Naive thymus-derived CD4-positive, alpha-beta T cell (primary cell): ENCODE measurements at regions of chr14 and their contacts with region 1.

Region 1: DNA sequence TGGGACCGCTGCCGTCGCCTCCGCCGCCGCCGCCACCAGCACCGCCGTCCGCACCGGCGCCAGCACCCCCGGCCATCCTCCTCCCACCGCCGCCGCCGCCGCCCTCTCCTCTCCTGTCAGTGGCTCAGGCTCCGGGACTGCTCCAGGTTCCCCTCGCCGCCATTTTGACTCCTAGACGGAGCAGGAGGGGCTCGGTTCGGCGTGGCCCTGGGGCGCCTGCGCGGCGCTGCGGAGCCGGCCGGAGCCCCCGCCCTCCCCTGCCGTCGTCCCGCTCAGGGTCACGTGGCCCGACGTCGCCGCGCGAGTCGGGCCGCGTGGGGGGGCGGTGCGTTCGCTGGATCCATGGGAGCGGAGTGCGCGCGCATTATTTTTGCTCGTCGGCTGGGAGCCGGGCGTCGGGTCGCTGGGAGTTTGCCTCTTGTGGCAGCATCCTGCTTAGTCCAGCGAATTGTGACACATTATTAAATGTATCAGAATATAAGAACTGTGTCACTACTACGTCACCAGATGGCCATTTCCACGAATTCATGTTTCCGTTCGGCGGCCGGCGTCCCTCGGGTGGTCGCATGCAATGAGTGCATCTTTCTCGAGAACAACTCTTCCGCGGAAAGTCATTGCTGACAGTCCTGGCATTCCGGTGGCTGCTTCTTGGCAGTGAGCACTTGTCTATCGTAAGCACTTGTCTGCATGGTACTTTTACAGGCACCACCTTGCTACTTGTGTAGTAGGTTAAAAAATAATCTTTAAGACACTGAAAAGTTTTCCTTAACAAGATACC is at the start of gene BTBD7:
- DNase-seq: peak; percentile 91 to 95 (median 93)
- ATAC-seq: peak; percentile 96
- H3K4me3 ChIP-seq: peak within 1 kb of the TSS; percentile 86
- H3K4me3 Mint-ChIP-seq: peak within 1 kb of the TSS; percentile 90 to 96 (median 92)
- H3K27ac ChIP-seq: peak within 1 kb of the TSS; percentile 90
- H3K27ac Mint-ChIP-seq: peak within 1 kb of the TSS; percentile 87 to 98 (median 93)
- H3K4me1 ChIP-seq: peaks cover 19 to 21% of the 10 kb centered on the region in 2 donors
- H3K4me1 Mint-ChIP-seq: peaks cover 34 to 64% (median 54%) of the 10 kb centered on the region in 7 donors
- H3K27me3 ChIP-seq: no peaks in the 10 kb centered on the region
- H3K27me3 Mint-ChIP-seq: no peaks in the 10 kb centered on the region
- total RNA-seq, gene BTBD7: 18.5 to 31.7 (median 27.5) TPM

Region 2: GRCh38 chr14:93206793-93207467 is 126.1 kb before region 1 on chr14 and contains the starts of genes GON7 and UBR7:
- CTCF ChIA-PET with region 1: no interaction called
- POLR2A ChIA-PET with region 1: interaction called, 3 read pairs
- intact Hi-C with region 1: loop called (anchors 1 kb)
- DNase-seq: peak; percentile 66 to 91 (median 83)
- ATAC-seq: peak; percentile 99
- H3K4me3 ChIP-seq: peak within 1 kb of the TSS; percentile 81
- H3K4me3 Mint-ChIP-seq: peak within 1 kb of the TSS; percentile 75 to 99 (median 94)
- H3K27ac ChIP-seq: peak within 1 kb of the TSS; percentile 87
- H3K27ac Mint-ChIP-seq: peak within 1 kb of the TSS; percentile 88 to 97 (median 93)
- H3K4me1 ChIP-seq: peaks cover 13 to 22% of the 10 kb centered on the region in 2 donors
- H3K4me1 Mint-ChIP-seq: peaks cover 22 to 65% (median 50%) of the 10 kb centered on the region in 7 donors
- H3K27me3 ChIP-seq: no peaks in the 10 kb centered on the region
- H3K27me3 Mint-ChIP-seq: no peaks in the 10 kb centered on the region
- total RNA-seq, gene GON7: 3.5 to 17.4 (median 8.3) TPM
- total RNA-seq, gene UBR7: 10.1 to 31.3 (median 13.5) TPM

Region 3: GRCh38 chr14:94100847-94101246 is 767.8 kb after region 1 on chr14:
- CTCF ChIA-PET with region 1: no interaction called
- POLR2A ChIA-PET with region 1: no interaction called
- intact Hi-C with region 1: no loop called
- DNase-seq: no peak
- ATAC-seq: no peak
- H3K4me3 ChIP-seq: no peak overlapping the region
- H3K4me3 Mint-ChIP-seq: no peak overlapping the region
- H3K27ac ChIP-seq: no peak overlapping the region
- H3K27ac Mint-ChIP-seq: no peak overlapping the region
- H3K4me1 ChIP-seq: no peaks in the 10 kb centered on the region
- H3K4me1 Mint-ChIP-seq: no peaks in the 10 kb centered on the region
- H3K27me3 ChIP-seq: no peaks in the 10 kb centered on the region
- H3K27me3 Mint-ChIP-seq: no peaks in the 10 kb centered on the region